ENCODE measurements at regions of chr1 and their contacts with region 1.

Region 1: DNA sequence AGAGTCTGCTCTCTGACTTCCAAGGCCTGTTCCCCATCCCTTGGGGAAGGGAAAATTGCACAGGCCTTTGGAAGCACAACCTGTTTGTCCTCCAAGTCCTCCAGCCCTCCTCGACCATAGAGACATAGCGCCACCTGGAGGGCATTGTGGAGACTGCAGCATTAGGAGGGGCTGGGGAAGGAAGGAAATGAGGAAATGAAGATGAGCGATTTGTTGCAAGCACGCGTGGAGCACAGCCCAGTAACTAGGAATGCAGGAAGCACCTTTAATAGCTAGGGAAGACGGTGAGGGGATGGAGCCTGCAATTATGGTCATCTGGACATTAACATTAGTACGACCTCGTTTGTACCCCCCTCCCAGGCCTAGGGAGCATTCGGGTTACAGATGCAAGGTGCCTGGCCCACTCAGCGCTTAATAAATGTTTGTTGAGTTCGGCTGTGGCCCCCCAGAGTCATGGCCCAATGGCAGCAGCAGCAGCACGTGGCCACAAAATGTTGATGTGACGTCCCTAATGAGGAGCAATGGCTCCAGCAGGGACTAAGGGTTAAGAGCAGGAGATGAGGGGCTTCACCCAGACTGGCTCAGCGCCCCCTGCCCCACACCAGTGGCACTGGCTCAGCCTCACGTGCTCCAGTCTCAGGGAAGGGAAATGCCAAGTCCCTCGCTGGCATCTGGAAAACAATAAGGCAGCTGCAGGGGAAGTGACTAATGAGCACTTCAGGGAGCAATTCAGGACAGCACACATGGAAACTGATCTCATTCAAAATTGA is 8.0 kb upstream of the CAMK2N1 start:
- DNase-seq: peak; percentile 85 to 86
- ATAC-seq: peak; percentile 75 to 95 (median 88)
- H3K4me3 ChIP-seq: no peak overlapping the region
- H3K27ac ChIP-seq: peak overlapping the region in 3 of 10 donors; percentile 16 to 79 (median 49)
- H3K4me1 ChIP-seq: peaks cover 5 to 31% (median 23%) of the 10 kb centered on the region in 9 donors
- H3K27me3 ChIP-seq: peaks cover 0 to 3% (median 0%) of the 10 kb centered on the region in 7 donors
- CTCF ChIP-seq: peak; percentile 94 to 98 (median 97)

Region 2: GRCh38 chr1:19967808-19968207 is 526.2 kb before region 1 on chr1:
- intact Hi-C with region 1: loop called in 1 of 10 experiments (anchors 10 kb)
- DNase-seq: peak; percentile 62 to 76
- ATAC-seq: peak; percentile 88 to 93 (median 90)
- H3K4me3 ChIP-seq: no peak overlapping the region
- H3K27ac ChIP-seq: peak overlapping the region in 8 of 10 donors; percentile 55 to 87 (median 80)
- H3K4me1 ChIP-seq: peaks cover 0 to 20% (median 5%) of the 10 kb centered on the region in 9 donors
- H3K27me3 ChIP-seq: peaks cover 0 to 21% (median 6%) of the 10 kb centered on the region in 7 donors
- CTCF ChIP-seq: no peak

Region 3: DNA sequence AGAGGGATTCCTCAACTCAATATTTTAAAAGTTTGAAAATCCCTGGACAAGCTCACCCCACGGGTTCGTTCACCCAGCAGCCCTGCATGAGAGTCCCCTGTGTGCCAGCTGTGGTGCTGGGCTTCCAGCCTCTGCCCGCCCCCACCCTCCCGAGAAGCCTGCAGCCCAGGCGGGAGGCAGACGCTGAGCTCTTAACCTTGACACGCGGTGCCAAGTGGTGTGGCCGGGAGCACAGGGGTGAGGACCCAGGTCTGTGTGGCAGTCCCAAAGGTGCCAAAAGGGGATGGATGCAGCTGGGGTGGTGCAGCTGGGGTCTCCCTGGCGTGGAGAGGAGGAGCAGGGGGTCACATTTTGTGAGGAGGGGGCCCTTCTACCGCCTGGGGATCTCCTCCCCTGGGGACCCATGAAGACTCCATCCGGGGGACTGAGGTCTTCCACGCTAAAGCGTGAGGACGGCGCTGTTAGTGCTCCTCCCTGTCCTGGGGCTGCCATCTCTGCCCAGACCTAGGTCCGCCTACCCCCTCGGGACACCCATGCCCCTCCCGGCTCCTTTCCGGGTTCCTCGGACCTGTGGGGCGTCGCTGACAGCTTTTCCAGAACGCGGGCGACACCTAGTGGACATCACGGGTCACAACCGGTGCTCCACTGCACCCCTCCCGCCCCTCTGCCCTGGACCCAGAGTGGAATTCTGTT is 342.0 kb before region 1 on chr1:
- intact Hi-C with region 1: loop called in 2 of 10 experiments (anchors 5 kb)
- DNase-seq: peak; percentile 83 to 87
- ATAC-seq: peak; percentile 89 to 96 (median 93)
- H3K4me3 ChIP-seq: peak overlapping the region; percentile 1 to 53 (median 44)
- H3K27ac ChIP-seq: peak overlapping the region in 4 of 10 donors; percentile 29 to 73 (median 48)
- H3K4me1 ChIP-seq: peaks cover 3 to 27% (median 15%) of the 10 kb centered on the region in 9 donors
- H3K27me3 ChIP-seq: peaks cover 0 to 20% (median 0%) of the 10 kb centered on the region in 7 donors
- CTCF ChIP-seq: peak; percentile 91 to 97 (median 95)

Region 4: GRCh38 chr1:20212685-20213331 is 281.2 kb before region 1 on chr1:
- intact Hi-C with region 1: loop called (anchors 1 to 5 kb)
- DNase-seq: peak; percentile 50 to 66
- ATAC-seq: peak; percentile 60 to 83 (median 70)
- H3K4me3 ChIP-seq: no peak overlapping the region
- H3K27ac ChIP-seq: no peak overlapping the region
- H3K4me1 ChIP-seq: peaks cover 0 to 11% (median 8%) of the 10 kb centered on the region in 9 donors
- H3K27me3 ChIP-seq: peaks cover 0 to 62% (median 40%) of the 10 kb centered on the region in 7 donors
- CTCF ChIP-seq: peak; percentile 75 to 88 (median 79)

Region 5: DNA sequence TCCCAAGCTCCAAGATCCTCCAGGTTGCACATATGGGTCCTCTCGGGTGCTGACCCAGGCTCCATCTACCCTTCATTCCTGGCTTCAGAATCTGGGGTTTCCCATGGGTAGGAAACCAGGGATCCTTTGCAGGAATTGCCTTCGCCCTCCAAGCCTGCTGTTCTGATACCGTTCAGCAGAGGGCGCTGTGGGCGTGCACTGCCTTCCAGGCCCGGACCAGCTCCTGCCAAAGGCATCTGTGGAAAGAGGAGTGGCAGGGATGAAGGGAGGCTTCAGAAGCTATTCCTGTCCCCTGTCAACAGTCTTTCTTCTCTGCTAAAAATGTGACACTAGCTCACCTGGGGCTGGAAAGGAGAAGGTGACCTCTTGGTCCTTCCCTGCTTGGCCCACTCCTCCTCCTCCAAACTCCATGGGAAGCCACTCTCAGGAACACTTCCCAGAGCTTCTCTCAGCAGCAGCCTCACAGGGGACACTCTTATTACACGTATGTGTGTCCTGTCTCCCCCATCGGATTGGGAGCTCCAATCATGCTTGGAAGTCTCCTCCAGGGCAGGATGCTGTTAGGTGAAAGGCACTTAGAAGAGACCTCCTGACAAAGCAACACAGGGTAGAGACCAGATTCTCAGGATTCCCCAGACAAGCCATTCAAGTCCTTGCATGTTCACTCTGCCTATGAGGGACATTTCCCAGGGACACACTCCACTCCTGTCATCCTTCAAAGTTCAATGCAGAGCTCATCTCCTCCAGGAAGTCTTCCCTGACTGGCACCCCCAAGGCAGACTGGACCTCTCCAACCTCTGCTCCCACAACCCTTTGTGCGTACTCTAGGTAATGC is 132.0 kb before region 1 on chr1:
- intact Hi-C with region 1: loop called in 8 of 10 experiments (anchors 1 to 10 kb)
- DNase-seq: peak; percentile 60 to 74
- ATAC-seq: peak in 3 of 8 donors; percentile 32 to 50 (median 36)
- H3K4me3 ChIP-seq: no peak overlapping the region
- H3K27ac ChIP-seq: no peak overlapping the region
- H3K4me1 ChIP-seq: peaks cover 0 to 37% (median 16%) of the 10 kb centered on the region in 9 donors
- H3K27me3 ChIP-seq: peaks cover 0 to 58% (median 33%) of the 10 kb centered on the region in 7 donors
- CTCF ChIP-seq: peak; percentile 58 to 81 (median 74)

Region 6: DNA sequence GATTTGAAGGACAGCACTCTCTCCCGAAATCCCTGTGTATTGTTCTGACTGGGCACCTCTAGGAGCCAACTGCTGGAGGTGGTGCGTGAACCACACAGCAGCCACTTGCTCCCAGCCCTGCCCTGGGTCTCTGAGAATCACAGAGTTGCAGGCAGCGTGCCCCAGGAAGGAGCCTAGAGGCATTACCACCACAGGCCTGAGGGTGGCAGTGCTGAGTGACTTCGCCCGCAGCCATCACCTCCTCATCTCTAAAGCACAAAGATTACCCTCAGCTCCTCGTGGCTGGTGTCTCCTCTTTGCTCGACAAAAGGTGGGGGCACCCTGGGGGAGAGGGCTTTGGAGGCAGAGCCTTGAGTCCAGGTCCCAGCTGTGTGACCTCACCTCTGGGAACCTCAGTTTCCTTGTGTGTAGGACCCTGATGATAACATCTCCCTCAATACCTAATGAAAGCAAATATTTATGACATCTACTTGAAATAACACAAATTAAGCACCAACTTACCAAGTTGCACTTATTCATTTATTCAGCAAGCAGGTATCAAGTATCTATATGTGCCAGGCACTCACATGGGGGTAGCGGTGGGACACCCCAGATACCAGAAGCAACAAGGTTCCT is 117.0 kb before region 1 on chr1:
- intact Hi-C with region 1: loop called in 5 of 10 experiments (anchors 1 to 5 kb)
- DNase-seq: peak; percentile 16 to 53
- ATAC-seq: peak in 3 of 8 donors; percentile 44 to 64 (median 62)
- H3K4me3 ChIP-seq: no peak overlapping the region
- H3K27ac ChIP-seq: no peak overlapping the region
- H3K4me1 ChIP-seq: peaks cover 0 to 5% (median 0%) of the 10 kb centered on the region in 9 donors
- H3K27me3 ChIP-seq: peaks cover 0 to 85% (median 27%) of the 10 kb centered on the region in 7 donors
- CTCF ChIP-seq: peak; percentile 26 to 84 (median 74)

Region 7: GRCh38 chr1:20448671-20449071 is 45.4 kb before region 1 on chr1:
- intact Hi-C with region 1: no loop called
- DNase-seq: no peak
- ATAC-seq: no peak
- H3K4me3 ChIP-seq: no peak overlapping the region
- H3K27ac ChIP-seq: no peak overlapping the region
- H3K4me1 ChIP-seq: no peaks in the 10 kb centered on the region
- H3K27me3 ChIP-seq: peaks cover 0 to 58% (median 28%) of the 10 kb centered on the region in 7 donors
- CTCF ChIP-seq: no peak

Region 8: DNA sequence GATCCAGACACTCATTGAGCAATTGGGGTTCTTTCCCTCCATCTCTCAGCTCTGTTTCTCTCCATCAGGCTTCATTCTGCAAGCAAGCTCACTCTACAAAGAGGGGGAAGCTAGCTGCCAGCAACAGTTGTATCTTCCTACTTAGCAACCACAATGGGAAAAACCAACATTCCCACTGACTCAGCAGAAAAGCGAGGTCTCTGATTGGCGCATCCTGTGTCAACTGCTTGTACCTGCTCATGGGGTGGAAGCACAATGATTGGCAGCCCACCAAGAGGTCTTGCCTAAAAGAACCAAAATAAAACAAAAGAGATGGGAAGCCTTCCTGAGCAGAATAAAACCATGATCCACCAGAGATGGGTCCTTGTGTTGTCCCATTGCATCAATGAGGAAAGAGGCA is 90.9 kb after region 1 on chr1:
- intact Hi-C with region 1: no loop called
- DNase-seq: no peak
- ATAC-seq: no peak
- H3K4me3 ChIP-seq: no peak overlapping the region
- H3K27ac ChIP-seq: no peak overlapping the region
- H3K4me1 ChIP-seq: peaks cover 2 to 17% (median 12%) of the 10 kb centered on the region in 9 donors
- H3K27me3 ChIP-seq: peaks cover 0 to 35% (median 17%) of the 10 kb centered on the region in 7 donors
- CTCF ChIP-seq: no peak

Measured in heart right ventricle (tissue), 16 donors.